Activated B cell treated with CpG ODN at 0.5 μM for 24 hours (primary cell): ENCODE measurements at regions of chr11 and their contacts with region 1.

Region 1: DNA sequence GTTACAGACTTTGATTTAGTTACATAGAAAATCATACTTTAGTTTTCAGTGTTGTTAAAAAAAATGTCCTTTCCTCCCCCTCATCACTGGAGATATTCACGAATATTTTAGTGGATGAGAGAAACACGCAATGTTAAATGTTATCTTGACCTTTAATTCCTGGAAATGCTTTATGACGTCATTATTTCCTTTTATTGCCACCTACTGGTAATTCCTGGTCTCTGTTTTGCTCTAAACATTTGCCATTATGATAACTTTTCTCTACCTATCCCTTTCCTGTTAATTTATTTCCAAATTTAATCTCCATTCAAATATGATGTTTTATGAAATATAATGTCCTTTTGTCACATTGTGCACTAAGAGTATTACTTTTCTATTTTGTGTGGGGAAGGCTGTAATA is 770.6 kb downstream of the FAM181B start:
- DNase-seq: no peak
- ATAC-seq: no peak
- H3K4me3 Mint-ChIP-seq: no peak overlapping the region
- H3K27ac Mint-ChIP-seq: no peak overlapping the region
- H3K4me1 Mint-ChIP-seq: peaks cover 2% of the 10 kb centered on the region
- H3K27me3 Mint-ChIP-seq: no peaks in the 10 kb centered on the region
- CTCF ChIP-seq: no peak

Region 2: GRCh38 chr11:81644239-81644840 is 318.7 kb before region 1 on chr11:
- CTCF ChIA-PET with region 1: no interaction called
- POLR2A ChIA-PET with region 1: no interaction called
- intact Hi-C with region 1: loop called (anchors 2 kb)
- DNase-seq: no peak
- ATAC-seq: peak; percentile 57
- H3K4me3 Mint-ChIP-seq: no peak overlapping the region
- H3K27ac Mint-ChIP-seq: no peak overlapping the region
- H3K4me1 Mint-ChIP-seq: no peaks in the 10 kb centered on the region
- H3K27me3 Mint-ChIP-seq: peaks cover 2% of the 10 kb centered on the region
- CTCF ChIP-seq: peak; percentile 31

Region 3: DNA sequence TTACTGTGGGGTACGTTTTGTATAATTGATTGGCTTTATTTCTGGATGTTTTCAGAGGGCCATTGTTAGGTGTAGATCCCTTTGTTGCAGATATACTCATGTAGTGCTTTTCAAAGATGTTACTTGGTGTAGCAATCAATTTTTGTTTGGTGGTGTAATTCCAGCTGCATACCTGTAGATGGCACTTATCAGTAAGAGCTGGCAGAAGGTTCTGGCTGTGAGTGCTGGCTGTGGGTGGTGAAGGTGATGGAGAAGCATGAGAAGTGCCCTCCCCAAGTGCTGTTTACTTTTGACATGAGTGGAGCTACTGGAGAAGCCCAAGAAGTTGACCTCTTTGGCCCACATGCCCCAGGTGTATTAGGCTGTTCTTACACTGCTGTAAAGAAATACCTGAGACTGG is 304.3 kb before region 1 on chr11:
- CTCF ChIA-PET with region 1: no interaction called
- POLR2A ChIA-PET with region 1: no interaction called
- intact Hi-C with region 1: loop called (anchors 5 kb)
- DNase-seq: no peak
- ATAC-seq: no peak
- H3K4me3 Mint-ChIP-seq: no peak overlapping the region
- H3K27ac Mint-ChIP-seq: no peak overlapping the region
- H3K4me1 Mint-ChIP-seq: no peaks in the 10 kb centered on the region
- H3K27me3 Mint-ChIP-seq: no peaks in the 10 kb centered on the region
- CTCF ChIP-seq: no peak

Region 4: DNA sequence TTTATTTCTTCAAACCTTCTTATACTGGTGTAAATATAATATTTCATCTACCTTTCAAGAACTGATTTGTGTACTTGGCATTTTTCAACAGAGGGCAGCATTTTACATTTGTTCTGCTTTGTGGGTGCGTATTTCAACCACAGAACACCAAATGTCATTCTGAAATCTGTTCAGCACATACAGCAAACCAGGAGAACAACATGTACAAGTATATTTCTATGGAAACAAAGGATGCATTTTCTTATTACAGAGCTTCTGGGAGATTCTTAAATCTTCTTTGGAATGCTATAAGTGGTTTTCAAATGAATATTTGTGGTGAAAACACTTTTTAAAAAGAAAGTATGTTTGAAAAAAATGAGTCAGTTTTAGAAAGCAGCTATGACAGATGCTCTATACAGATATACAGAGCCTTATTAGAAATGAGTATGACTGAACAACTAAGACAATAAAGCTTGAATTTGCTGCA is 175.4 kb before region 1 on chr11:
- CTCF ChIA-PET with region 1: interaction called, 4 read pairs
- POLR2A ChIA-PET with region 1: no interaction called
- intact Hi-C with region 1: loop called (anchors 1 kb)
- DNase-seq: no peak
- ATAC-seq: no peak
- H3K4me3 Mint-ChIP-seq: no peak overlapping the region
- H3K27ac Mint-ChIP-seq: no peak overlapping the region
- H3K4me1 Mint-ChIP-seq: no peaks in the 10 kb centered on the region
- H3K27me3 Mint-ChIP-seq: no peaks in the 10 kb centered on the region
- CTCF ChIP-seq: peak; percentile 19

Region 5: GRCh38 chr11:81874635-81875034 is 88.4 kb before region 1 on chr11:
- CTCF ChIA-PET with region 1: no interaction called
- POLR2A ChIA-PET with region 1: no interaction called
- intact Hi-C with region 1: loop called (anchors 5 kb)
- DNase-seq: no peak
- ATAC-seq: no peak
- H3K4me3 Mint-ChIP-seq: no peak overlapping the region
- H3K27ac Mint-ChIP-seq: no peak overlapping the region
- H3K4me1 Mint-ChIP-seq: peaks cover 38% of the 10 kb centered on the region
- H3K27me3 Mint-ChIP-seq: peaks cover 5% of the 10 kb centered on the region
- CTCF ChIP-seq: no peak

Region 6: GRCh38 chr11:81915045-81915444 is 48.0 kb before region 1 on chr11:
- CTCF ChIA-PET with region 1: no interaction called
- POLR2A ChIA-PET with region 1: no interaction called
- intact Hi-C with region 1: loop called (anchors 5 kb)
- DNase-seq: no peak
- ATAC-seq: no peak
- H3K4me3 Mint-ChIP-seq: no peak overlapping the region
- H3K27ac Mint-ChIP-seq: no peak overlapping the region
- H3K4me1 Mint-ChIP-seq: no peaks in the 10 kb centered on the region
- H3K27me3 Mint-ChIP-seq: no peaks in the 10 kb centered on the region
- CTCF ChIP-seq: no peak